GM12878 (cell line): ENCODE measurements at regions of chr4 and their contacts with region 1.

Region 1: GRCh38 chr4:36551697-36552214 is 270.3 kb downstream of the DTHD1 start:
- DNase-seq: peak; percentile 69
- ATAC-seq: peak; percentile 95
- H3K4me3 ChIP-seq: no peak overlapping the region
- H3K27ac ChIP-seq: peak overlapping the region; percentile 90
- H3K4me1 ChIP-seq: no peaks in the 10 kb centered on the region; the same call in 1 of the 2 replicates
- H3K27me3 ChIP-seq: no peaks in the 10 kb centered on the region
- CTCF ChIP-seq: no peak
- EP300 ChIP-seq: peak; percentile 63 to 81; a peak in 3 of 4 replicates
- POLR2A ChIP-seq: no peak
- RAD21 ChIP-seq: 0 out of 2 replicates have a peak, but pooled peaks have one; percentile 7

Region 2: GRCh38 chr4:36568575-36568974 is 16.8 kb after region 1 on chr4:
- CTCF ChIA-PET with region 1: interaction called, 4 read pairs
- POLR2A ChIA-PET with region 1: no interaction called
- RAD21 ChIA-PET with region 1: interaction called, 7 read pairs
- SMC1A ChIA-PET with region 1: interaction called, 21 read pairs
- in situ Hi-C with region 1: no loop called
- intact Hi-C with region 1: loop called (anchors 2 kb)
- DNase-seq: no peak
- ATAC-seq: no peak
- H3K4me3 ChIP-seq: no peak overlapping the region
- H3K27ac ChIP-seq: no peak overlapping the region
- H3K4me1 ChIP-seq: no peaks in the 10 kb centered on the region
- H3K27me3 ChIP-seq: no peaks in the 10 kb centered on the region
- CTCF ChIP-seq: no peak
- EP300 ChIP-seq: no peak
- POLR2A ChIP-seq: no peak
- RAD21 ChIP-seq: no peak

Region 3: DNA sequence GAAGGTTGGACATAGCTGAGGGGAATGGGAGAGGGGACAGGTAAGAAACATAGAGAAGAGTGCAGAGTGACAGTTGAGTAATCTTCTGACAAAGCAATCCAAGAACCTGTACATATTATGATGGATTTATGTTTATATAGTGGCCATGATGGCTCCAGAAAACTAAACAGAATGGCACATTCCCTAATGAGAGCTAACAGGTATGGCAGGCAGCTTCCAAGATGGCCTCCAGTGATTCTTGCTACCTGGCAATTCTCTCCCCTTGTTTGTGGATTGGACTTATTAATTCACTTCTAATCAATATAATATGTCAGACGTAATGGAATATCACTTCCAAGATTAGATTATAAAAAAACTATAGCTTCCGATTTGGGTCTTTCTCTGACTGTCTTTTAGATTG is 89.1 kb after region 1 on chr4:
- CTCF ChIA-PET with region 1: no interaction called
- POLR2A ChIA-PET with region 1: no interaction called
- RAD21 ChIA-PET with region 1: no interaction called
- SMC1A ChIA-PET with region 1: interaction called, 14 read pairs
- in situ Hi-C with region 1: no loop called
- intact Hi-C with region 1: no loop called
- DNase-seq: no peak
- ATAC-seq: no peak
- H3K4me3 ChIP-seq: no peak overlapping the region
- H3K27ac ChIP-seq: no peak overlapping the region
- H3K4me1 ChIP-seq: no peaks in the 10 kb centered on the region
- H3K27me3 ChIP-seq: no peaks in the 10 kb centered on the region
- CTCF ChIP-seq: no peak
- EP300 ChIP-seq: no peak
- POLR2A ChIP-seq: no peak
- RAD21 ChIP-seq: no peak

Region 4: GRCh38 chr4:36651253-36651652 is 99.5 kb after region 1 on chr4:
- CTCF ChIA-PET with region 1: no interaction called
- POLR2A ChIA-PET with region 1: interaction called, 3 read pairs
- RAD21 ChIA-PET with region 1: interaction called, 19 read pairs
- SMC1A ChIA-PET with region 1: interaction called, 8 read pairs
- in situ Hi-C with region 1: no loop called
- intact Hi-C with region 1: loop called (anchors 5 kb)
- DNase-seq: peak; percentile 79
- ATAC-seq: peak; percentile 99
- H3K4me3 ChIP-seq: no peak overlapping the region
- H3K27ac ChIP-seq: peak overlapping the region; percentile 56
- H3K4me1 ChIP-seq: peaks cover 9% of the 10 kb centered on the region
- H3K27me3 ChIP-seq: no peaks in the 10 kb centered on the region
- CTCF ChIP-seq: no peak
- EP300 ChIP-seq: peak; percentile 76 to 94; a peak in 3 of 4 replicates
- POLR2A ChIP-seq: no peak
- RAD21 ChIP-seq: no peak

Region 5: DNA sequence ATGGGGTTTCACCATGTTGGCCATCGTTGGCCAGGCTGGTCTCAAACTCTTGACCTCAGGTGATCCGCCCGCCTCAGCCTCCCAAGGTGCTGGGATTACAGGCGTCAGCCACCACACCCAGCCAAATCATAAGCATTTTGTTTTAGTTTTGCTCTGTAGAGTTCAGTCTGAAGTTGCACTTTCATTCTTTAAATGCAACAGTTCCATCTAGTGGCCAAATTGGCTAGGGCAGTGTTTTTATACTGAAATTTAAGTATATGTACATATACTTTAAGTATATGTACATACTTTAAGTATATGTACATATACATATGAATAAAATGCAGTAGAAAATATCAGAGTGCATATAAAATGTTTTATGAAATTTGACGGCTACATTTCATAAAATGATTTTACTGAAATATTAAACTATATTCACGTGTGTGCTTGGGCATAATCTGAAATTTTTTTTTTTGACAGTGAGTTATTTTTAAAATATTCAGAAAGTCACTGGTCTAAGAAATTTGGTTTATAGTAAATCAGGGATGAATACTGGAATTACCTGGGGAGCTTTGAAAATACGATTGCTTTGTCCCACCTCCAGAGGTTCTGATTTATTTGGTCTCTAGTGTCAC is 838.3 kb after region 1 on chr4:
- CTCF ChIA-PET with region 1: no interaction called
- POLR2A ChIA-PET with region 1: no interaction called
- RAD21 ChIA-PET with region 1: no interaction called
- SMC1A ChIA-PET with region 1: no interaction called
- in situ Hi-C with region 1: no loop called
- intact Hi-C with region 1: loop called (anchors 10 kb)
- DNase-seq: no peak
- ATAC-seq: peak; percentile 84
- H3K4me3 ChIP-seq: no peak overlapping the region
- H3K27ac ChIP-seq: no peak overlapping the region
- H3K4me1 ChIP-seq: no peaks in the 10 kb centered on the region
- H3K27me3 ChIP-seq: no peaks in the 10 kb centered on the region
- CTCF ChIP-seq: peak; percentile 62 to 75 (median 70)
- EP300 ChIP-seq: no peak
- POLR2A ChIP-seq: no peak
- RAD21 ChIP-seq: peak; percentile 79